ENCODE measurements at regions of chr4 and their contacts with region 1.

Region 1: GRCh38 chr4:99853999-99854398 is 37.4 kb downstream of the DAPP1 start:
- DNase-seq: no peak
- ATAC-seq: no peak
- H3K4me3 Mint-ChIP-seq: no peak overlapping the region
- H3K27ac Mint-ChIP-seq: no peak overlapping the region
- H3K4me1 Mint-ChIP-seq: peaks cover 59% of the 10 kb centered on the region
- H3K27me3 Mint-ChIP-seq: no peaks in the 10 kb centered on the region
- CTCF ChIP-seq: no peak

Region 2: DNA sequence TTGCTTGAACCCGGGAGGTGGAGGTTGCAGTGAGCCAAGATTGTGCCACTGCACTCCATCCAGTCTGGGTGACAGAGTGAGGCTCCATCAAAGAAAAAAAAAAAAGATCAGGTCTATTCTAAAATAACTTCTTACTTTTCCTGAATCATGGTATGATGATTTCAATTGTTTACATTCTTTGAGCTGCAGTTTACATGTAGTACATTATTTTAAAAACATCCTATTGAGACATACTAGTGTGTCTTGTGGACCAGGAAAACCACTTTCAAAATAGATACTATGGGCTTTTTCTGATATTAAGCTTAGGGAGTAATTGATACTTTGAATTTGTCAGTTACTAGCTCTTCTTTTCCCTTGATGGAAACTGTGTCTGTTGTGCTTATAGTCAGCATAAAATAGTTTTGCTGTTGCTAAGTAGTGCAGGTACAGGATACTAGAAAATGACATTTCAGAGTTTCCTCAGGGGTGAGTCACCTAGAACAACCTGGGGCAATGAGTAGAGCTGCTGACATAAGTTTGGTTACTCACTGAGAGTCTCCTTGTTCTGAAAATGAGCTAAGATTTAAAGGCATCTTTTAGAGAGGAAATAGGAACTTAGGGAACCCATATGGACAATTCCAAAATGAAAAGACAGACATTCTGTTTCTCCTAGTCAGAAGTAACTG is 143.2 kb before region 1 on chr4:
- CTCF ChIA-PET with region 1: no interaction called
- POLR2A ChIA-PET with region 1: no interaction called
- intact Hi-C with region 1: no loop called
- DNase-seq: no peak
- ATAC-seq: peak; percentile 89
- H3K4me3 Mint-ChIP-seq: no peak overlapping the region
- H3K27ac Mint-ChIP-seq: no peak overlapping the region
- H3K4me1 Mint-ChIP-seq: peaks cover 5% of the 10 kb centered on the region
- H3K27me3 Mint-ChIP-seq: peaks cover 1% of the 10 kb centered on the region
- CTCF ChIP-seq: no peak

Region 3: DNA sequence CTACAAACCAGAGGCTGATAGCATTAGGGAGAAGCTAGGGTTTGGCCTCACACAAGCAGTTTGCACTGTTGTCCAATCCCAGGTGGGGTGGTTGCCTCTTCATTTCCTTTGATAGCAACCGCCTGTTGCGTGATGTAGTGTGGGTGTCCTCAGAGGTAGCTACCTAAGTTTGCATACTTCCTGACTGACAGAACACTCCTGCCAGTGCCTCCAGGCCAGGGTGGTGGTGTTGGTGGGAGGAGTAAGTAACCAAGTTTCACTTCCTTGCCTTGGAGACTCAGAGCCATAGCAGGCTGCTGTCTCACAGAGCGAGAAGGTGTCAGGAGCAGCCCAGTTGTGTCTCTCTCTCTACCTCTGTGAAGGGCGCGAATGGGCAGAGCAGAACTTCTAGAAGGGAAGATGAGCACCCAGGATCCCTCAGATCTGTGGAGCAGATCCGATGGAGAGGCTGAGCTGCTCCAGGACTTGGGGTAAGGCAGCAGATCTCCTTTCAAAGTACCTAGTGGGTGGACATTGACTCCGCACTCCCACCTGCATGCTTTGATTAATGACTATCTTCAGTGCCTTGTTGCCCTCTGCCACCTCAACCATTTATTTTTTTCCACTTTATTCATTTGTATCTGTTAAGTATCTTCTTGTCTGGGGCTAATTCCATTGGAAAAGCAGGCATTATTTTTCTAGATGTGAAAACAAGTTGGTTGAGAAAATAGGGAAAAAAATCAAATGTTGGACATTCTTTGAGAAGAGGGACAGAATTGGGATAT is 37.3 kb before region 1 on chr4 and contains the start of gene DAPP1:
- CTCF ChIA-PET with region 1: interaction called, 7 read pairs
- POLR2A ChIA-PET with region 1: interaction called, 9 read pairs
- intact Hi-C with region 1: loop called (anchors 5 kb)
- DNase-seq: peak; percentile 91
- ATAC-seq: peak; percentile 96
- H3K4me3 Mint-ChIP-seq: peak within 1 kb of the TSS; percentile 75
- H3K27ac Mint-ChIP-seq: peak within 1 kb of the TSS; percentile 86
- H3K4me1 Mint-ChIP-seq: peaks cover 63% of the 10 kb centered on the region
- H3K27me3 Mint-ChIP-seq: no peaks in the 10 kb centered on the region
- CTCF ChIP-seq: no peak
- total RNA-seq, gene DAPP1: 11.7 to 12.3 TPM

Region 4: DNA sequence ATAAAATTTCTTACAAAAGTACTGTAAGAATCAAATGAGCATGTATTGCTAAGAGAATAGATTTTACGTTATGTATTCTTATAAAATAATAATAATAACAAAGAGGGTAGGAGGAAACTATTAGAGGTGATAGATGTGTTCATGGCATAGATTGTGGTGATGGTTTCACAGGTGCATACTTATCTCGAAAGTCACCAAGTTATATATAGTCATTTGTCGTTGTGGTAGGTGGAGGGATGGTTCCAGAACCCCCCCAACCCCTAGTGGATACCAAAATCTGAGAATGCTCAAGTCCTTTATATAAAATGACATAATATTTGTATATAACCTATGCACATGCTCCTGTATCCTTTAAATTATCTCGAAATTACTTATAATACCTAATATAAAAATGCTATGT is 132.8 kb after region 1 on chr4:
- CTCF ChIA-PET with region 1: no interaction called
- POLR2A ChIA-PET with region 1: no interaction called
- intact Hi-C with region 1: no loop called
- DNase-seq: no peak
- ATAC-seq: no peak
- H3K4me3 Mint-ChIP-seq: no peak overlapping the region
- H3K27ac Mint-ChIP-seq: no peak overlapping the region
- H3K4me1 Mint-ChIP-seq: no peaks in the 10 kb centered on the region
- H3K27me3 Mint-ChIP-seq: peaks cover 5% of the 10 kb centered on the region
- CTCF ChIP-seq: no peak

Measured in activated CD8-positive, alpha-beta T cell treated with anti-CD3 and anti-CD28 coated beads for 36 hours (primary cell).